Right lobe of liver (tissue), 6 donors: ENCODE measurements at regions of chr4 and their contacts with region 1.

Region 1: DNA sequence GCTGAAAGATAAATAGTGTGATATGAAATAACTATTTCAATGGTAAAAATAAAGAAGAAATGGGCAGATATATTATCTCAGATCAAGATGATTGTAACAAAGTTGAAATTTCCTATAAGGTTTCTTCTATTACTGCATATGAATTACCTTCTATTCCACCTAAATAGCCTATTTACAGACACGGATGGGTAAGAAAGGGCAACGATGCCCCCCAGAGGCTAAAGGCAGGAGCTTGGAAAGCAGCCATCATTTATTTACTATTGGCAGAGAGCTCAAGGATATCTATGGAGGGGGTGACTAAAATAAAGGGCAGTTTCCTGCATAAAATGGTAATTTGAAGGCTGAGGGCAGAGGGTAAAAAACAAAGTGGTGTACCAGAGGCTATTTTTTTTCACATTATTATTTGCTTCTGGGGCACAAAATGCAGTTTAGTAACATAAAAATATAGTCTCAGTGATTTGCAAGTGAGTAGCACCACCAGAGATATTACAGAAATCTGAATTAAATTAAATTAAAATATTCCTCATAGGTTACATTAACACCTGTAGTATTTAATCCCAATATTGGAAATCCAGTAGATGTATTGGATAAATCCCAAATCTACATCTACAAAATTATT is 123.1 kb downstream of the BTC start:
- DNase-seq: peak in 1 of 3 donors; percentile 23
- ATAC-seq: peak; percentile 70 to 95 (median 78)
- H3K4me3 ChIP-seq: no peak overlapping the region
- H3K27ac ChIP-seq: no peak overlapping the region
- H3K4me1 ChIP-seq: no peaks in the 10 kb centered on the region
- H3K27me3 ChIP-seq: no peaks in the 10 kb centered on the region
- CTCF ChIP-seq: peak; percentile 37 to 67 (median 58)
- POLR2A ChIP-seq: no peak

Region 2: DNA sequence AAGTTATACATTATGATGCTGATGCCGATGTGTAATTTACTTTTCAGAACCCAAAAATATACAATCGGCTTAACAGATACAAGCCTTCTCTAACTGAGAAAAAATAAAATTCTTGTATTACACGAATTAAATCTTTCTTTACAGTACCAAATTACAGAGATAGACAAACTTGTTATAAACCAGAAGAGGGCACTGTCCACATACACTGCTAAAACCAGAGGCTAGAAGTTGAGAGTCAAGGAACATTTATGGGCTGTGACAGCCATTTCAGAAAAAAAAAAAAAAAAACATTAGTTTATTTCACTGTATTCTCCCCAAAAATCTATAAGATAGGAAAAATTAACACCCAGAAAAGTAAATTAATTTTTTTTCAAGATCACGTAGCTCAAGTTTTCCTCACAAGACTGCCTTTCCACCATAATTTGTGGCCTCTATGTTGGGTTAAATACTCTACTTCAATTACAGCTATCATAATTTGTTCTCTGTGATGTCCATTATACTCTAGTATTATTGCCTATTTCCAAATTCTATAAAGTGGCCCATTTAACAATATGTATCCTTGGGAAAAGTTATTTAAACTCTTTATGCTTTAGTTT is 294.2 kb before region 1 on chr4:
- intact Hi-C with region 1: loop called in 1 of 2 experiments (anchors 5 kb)
- DNase-seq: no peak
- ATAC-seq: peak; percentile 69 to 84 (median 74)
- H3K4me3 ChIP-seq: no peak overlapping the region
- H3K27ac ChIP-seq: no peak overlapping the region
- H3K4me1 ChIP-seq: no peaks in the 10 kb centered on the region
- H3K27me3 ChIP-seq: no peaks in the 10 kb centered on the region
- CTCF ChIP-seq: peak; percentile 57 to 62 (median 60)
- POLR2A ChIP-seq: no peak

Region 3: GRCh38 chr4:74423104-74423503 is 248.1 kb before region 1 on chr4:
- intact Hi-C with region 1: no loop called
- DNase-seq: no peak
- ATAC-seq: peak in 3 of 4 donors; percentile 23 to 62 (median 48)
- H3K4me3 ChIP-seq: no peak overlapping the region
- H3K27ac ChIP-seq: no peak overlapping the region
- H3K4me1 ChIP-seq: no peaks in the 10 kb centered on the region
- H3K27me3 ChIP-seq: no peaks in the 10 kb centered on the region
- CTCF ChIP-seq: no peak
- POLR2A ChIP-seq: no peak

Region 4: GRCh38 chr4:74738470-74739140 is 67.4 kb after region 1 on chr4:
- intact Hi-C with region 1: no loop called
- DNase-seq: no peak
- ATAC-seq: no peak
- H3K4me3 ChIP-seq: no peak overlapping the region
- H3K27ac ChIP-seq: no peak overlapping the region
- H3K4me1 ChIP-seq: no peaks in the 10 kb centered on the region
- H3K27me3 ChIP-seq: no peaks in the 10 kb centered on the region
- CTCF ChIP-seq: no peak
- POLR2A ChIP-seq: no peak